Mammary epithelial cell (primary cell): ENCODE measurements at regions of chr14 and their contacts with region 1.

Region 1: GRCh38 chr14:21557084-21557901 is 22.6 kb downstream of the OR10G3 start:
- DNase-seq: peak; percentile 65
- H3K4me3 ChIP-seq: peak overlapping the region in 2 of 3 experiments; percentile 33 to 42
- H3K27ac ChIP-seq: peak overlapping the region; percentile 28
- H3K4me1 ChIP-seq: no peaks in the 10 kb centered on the region
- H3K27me3 ChIP-seq: no peaks in the 10 kb centered on the region
- CTCF ChIP-seq: peak; percentile 61 to 68

Region 2: GRCh38 chr14:19974844-19975243 is 1582.4 kb before region 1 on chr14:
- CTCF ChIA-PET with region 1: no interaction called
- dilution Hi-C with region 1: no loop called
- in situ Hi-C with region 1: no loop called
- intact Hi-C with region 1: no loop called
- DNase-seq: no peak
- H3K4me3 ChIP-seq: no peak overlapping the region
- H3K27ac ChIP-seq: no peak overlapping the region
- H3K4me1 ChIP-seq: no peaks in the 10 kb centered on the region
- H3K27me3 ChIP-seq: no peaks in the 10 kb centered on the region
- CTCF ChIP-seq: no peak

Region 3: GRCh38 chr14:21408147-21408546 is 149.1 kb before region 1 on chr14:
- CTCF ChIA-PET with region 1: no interaction called
- dilution Hi-C with region 1: no loop called
- in situ Hi-C with region 1: no loop called
- intact Hi-C with region 1: loop called (anchors 5 kb)
- DNase-seq: peak; percentile 47
- H3K4me3 ChIP-seq: no peak overlapping the region
- H3K27ac ChIP-seq: no peak overlapping the region
- H3K4me1 ChIP-seq: no peaks in the 10 kb centered on the region
- H3K27me3 ChIP-seq: no peaks in the 10 kb centered on the region
- CTCF ChIP-seq: no peak

Region 4: DNA sequence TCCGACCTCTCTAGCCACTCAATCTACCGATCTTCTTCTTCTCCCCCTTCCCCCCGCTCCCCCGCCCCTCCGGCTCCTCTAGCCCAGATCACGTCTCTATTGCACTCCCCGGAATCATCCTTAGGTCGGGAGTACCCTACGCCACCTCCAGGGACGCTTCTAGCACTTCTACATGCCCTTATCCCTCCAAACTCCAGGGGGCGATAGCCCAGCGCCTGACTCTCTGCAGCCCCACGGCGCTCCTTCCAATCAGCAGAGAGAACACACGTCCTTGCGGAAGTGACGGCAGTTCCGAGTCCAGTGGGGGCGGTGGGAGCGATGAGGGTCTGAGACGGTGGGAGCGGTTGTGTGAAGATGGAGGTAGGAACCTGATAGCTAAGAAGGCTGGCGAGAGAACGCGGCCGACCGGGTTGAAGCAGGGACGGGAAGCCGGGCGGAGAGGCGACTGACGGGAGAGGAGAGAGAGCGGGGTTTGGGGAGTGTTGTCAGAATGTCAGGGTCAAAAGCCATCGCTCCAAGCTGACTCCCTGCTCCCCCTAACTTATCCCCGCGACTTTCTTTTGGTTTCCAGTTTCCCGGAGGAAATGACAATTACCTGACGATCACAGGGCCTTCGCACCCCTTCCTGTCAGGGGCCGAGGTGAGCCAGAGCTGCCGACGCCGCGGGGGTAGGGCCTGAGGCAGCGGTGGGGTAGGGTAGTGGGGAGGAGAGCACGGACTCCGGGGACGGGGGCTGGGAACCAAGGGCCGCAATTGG is 80.2 kb before region 1 on chr14 and contains the starts of genes RAB2B and TOX4:
- CTCF ChIA-PET with region 1: no interaction called
- dilution Hi-C with region 1: no loop called
- in situ Hi-C with region 1: no loop called
- intact Hi-C with region 1: loop called (anchors 1 kb)
- DNase-seq: peak; percentile 97
- H3K4me3 ChIP-seq: peak within 1 kb of the TSS; percentile 76 to 92 (median 77)
- H3K27ac ChIP-seq: peak within 1 kb of the TSS; percentile 83
- H3K4me1 ChIP-seq: peaks cover 5% of the 10 kb centered on the region
- H3K27me3 ChIP-seq: no peaks in the 10 kb centered on the region
- CTCF ChIP-seq: peak; percentile 89 to 100
- total RNA-seq, gene RAB2B: 17.6 to 21.8 TPM
- total RNA-seq, gene TOX4: 37.7 to 75.8 TPM

Region 5: GRCh38 chr14:21498553-21499526 is 58.5 kb before region 1 on chr14:
- CTCF ChIA-PET with region 1: no interaction called
- dilution Hi-C with region 1: no loop called
- in situ Hi-C with region 1: loop called in 1 of 2 experiments (anchors 10 kb)
- intact Hi-C with region 1: loop called (anchors 1 kb)
- DNase-seq: peak; percentile 19
- H3K4me3 ChIP-seq: no peak overlapping the region
- H3K27ac ChIP-seq: no peak overlapping the region
- H3K4me1 ChIP-seq: no peaks in the 10 kb centered on the region
- H3K27me3 ChIP-seq: no peaks in the 10 kb centered on the region
- CTCF ChIP-seq: peak; percentile 51 to 52

Region 6: GRCh38 chr14:21505012-21505553 is 52.2 kb before region 1 on chr14:
- CTCF ChIA-PET with region 1: no interaction called
- dilution Hi-C with region 1: no loop called
- in situ Hi-C with region 1: loop called in 1 of 2 experiments (anchors 10 kb)
- intact Hi-C with region 1: no loop called
- DNase-seq: no peak
- H3K4me3 ChIP-seq: no peak overlapping the region
- H3K27ac ChIP-seq: no peak overlapping the region
- H3K4me1 ChIP-seq: no peaks in the 10 kb centered on the region
- H3K27me3 ChIP-seq: no peaks in the 10 kb centered on the region
- CTCF ChIP-seq: no peak

Region 7: GRCh38 chr14:21510735-21511657 is 46.3 kb before region 1 on chr14 and contains the start of gene METTL3:
- CTCF ChIA-PET with region 1: interaction called, 6 read pairs
- dilution Hi-C with region 1: no loop called
- in situ Hi-C with region 1: loop called in 1 of 2 experiments (anchors 10 kb)
- intact Hi-C with region 1: loop called (anchors 1 kb)
- DNase-seq: peak; percentile 99
- H3K4me3 ChIP-seq: peak within 1 kb of the TSS; percentile 72 to 90 (median 76)
- H3K27ac ChIP-seq: peak within 1 kb of the TSS; percentile 59
- H3K4me1 ChIP-seq: no peaks in the 10 kb centered on the region
- H3K27me3 ChIP-seq: no peaks in the 10 kb centered on the region
- CTCF ChIP-seq: no peak
- total RNA-seq, gene METTL3: 40.3 to 43.3 TPM